IMR-90 (cell line): ENCODE measurements at regions of chr9 and their contacts with region 1.

Region 1: GRCh38 chr9:76393963-76394679 is at the start of gene RFK:
- DNase-seq: peak; percentile 93
- ATAC-seq: peak; percentile 96
- H3K4me3 ChIP-seq: peak within 1 kb of the TSS; percentile 86
- H3K27ac ChIP-seq: peak within 1 kb of the TSS; percentile 92
- H3K4me1 ChIP-seq: peaks cover 2% of the 10 kb centered on the region
- H3K27me3 ChIP-seq: no peaks in the 10 kb centered on the region
- CTCF ChIP-seq: peak; percentile 54
- POLR2A ChIP-seq: peak; percentile 76
- RAD21 ChIP-seq: peak; percentile 53
- total RNA-seq, gene RFK: 13.8 and 29.2 TPM in 2 replicates

Region 2: GRCh38 chr9:76321205-76321828 is 72.8 kb before region 1 on chr9:
- CTCF ChIA-PET with region 1: interaction called, 5 read pairs
- POLR2A ChIA-PET with region 1: no interaction called
- dilution Hi-C with region 1: no loop called
- in situ Hi-C with region 1: no loop called
- intact Hi-C with region 1: loop called (anchors 5 kb)
- DNase-seq: peak; percentile 89
- ATAC-seq: peak; percentile 93
- H3K4me3 ChIP-seq: no peak overlapping the region
- H3K27ac ChIP-seq: peak overlapping the region; percentile 85
- H3K4me1 ChIP-seq: peaks cover 3% of the 10 kb centered on the region
- H3K27me3 ChIP-seq: no peaks in the 10 kb centered on the region
- CTCF ChIP-seq: no peak
- POLR2A ChIP-seq: no peak
- RAD21 ChIP-seq: no peak